Calu3 (cell line): ENCODE measurements at regions of chr15 and their contacts with region 1.

Region 1: GRCh38 chr15:67456677-67457529 is 64.0 kb upstream of the C15orf61 start:
- DNase-seq: peak; percentile 92
- H3K4me3 Mint-ChIP-seq: no peak overlapping the region
- H3K27ac Mint-ChIP-seq: no peak overlapping the region
- H3K4me1 Mint-ChIP-seq: no peaks in the 10 kb centered on the region
- H3K27me3 Mint-ChIP-seq: no peaks in the 10 kb centered on the region
- CTCF ChIP-seq: peak; percentile 93

Region 2: GRCh38 chr15:67433495-67434099 is 23.3 kb before region 1 on chr15:
- CTCF ChIA-PET with region 1: interaction called, 13 read pairs
- intact Hi-C with region 1: no loop called
- DNase-seq: peak; percentile 69
- H3K4me3 Mint-ChIP-seq: no peak overlapping the region
- H3K27ac Mint-ChIP-seq: no peak overlapping the region
- H3K4me1 Mint-ChIP-seq: no peaks in the 10 kb centered on the region
- H3K27me3 Mint-ChIP-seq: no peaks in the 10 kb centered on the region
- CTCF ChIP-seq: peak; percentile 80

Region 3: GRCh38 chr15:67833710-67834511 is 377.0 kb after region 1 on chr15:
- CTCF ChIA-PET with region 1: interaction called, 7 read pairs
- intact Hi-C with region 1: loop called (anchors 1 kb)
- DNase-seq: peak; percentile 65
- H3K4me3 Mint-ChIP-seq: peak overlapping the region; percentile 66
- H3K27ac Mint-ChIP-seq: no peak overlapping the region
- H3K4me1 Mint-ChIP-seq: peaks cover 30% of the 10 kb centered on the region
- H3K27me3 Mint-ChIP-seq: peaks cover 85% of the 10 kb centered on the region
- CTCF ChIP-seq: peak; percentile 77